ENCODE measurements at regions of chr10 and their contacts with region 1.

Region 1: DNA sequence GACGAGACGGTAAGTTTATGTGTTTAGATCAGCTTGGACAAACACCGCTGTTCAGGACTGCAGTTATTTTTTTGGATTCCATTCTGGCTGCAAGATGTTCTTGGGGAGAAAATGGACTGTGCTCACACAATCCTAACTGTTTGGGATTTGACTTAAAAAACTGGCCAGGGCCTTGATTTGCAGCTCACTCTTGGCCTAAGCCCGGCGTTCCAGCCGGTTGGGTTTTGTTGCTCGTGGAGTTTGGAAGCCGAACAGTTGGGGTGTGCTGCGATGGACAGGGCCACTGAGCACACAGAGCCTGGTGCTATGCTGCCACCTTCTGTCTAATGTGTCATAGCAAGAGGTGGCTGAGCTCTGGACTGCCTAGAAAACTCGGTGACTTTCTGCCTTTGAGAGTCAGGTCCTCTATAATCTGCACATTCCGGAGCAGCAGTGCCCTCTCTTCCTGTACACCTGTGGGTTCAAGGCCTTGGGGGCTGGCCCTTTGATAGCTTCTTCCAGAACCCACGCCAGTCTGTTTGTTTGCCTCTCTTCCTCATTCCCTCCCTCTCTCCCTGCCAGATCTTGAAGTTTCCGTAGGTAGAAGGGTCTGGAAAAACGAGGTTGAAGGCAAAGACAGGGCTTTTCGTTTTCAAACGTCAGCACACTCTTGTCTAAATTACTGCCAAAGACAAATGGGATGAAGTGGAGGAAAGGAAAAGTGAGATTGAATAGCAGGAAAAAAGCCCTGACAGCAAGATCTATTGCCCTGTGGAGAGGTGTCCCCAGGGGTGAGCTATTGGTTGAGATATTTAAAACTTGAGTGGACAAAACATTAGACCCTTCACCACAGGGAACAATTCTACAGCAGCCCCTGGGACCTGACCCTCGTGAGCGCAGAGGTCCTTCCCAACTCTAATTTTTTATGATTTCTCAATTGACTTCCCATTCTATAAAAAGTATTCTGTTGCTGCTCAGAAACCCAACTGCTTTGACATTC is 167.5 kb upstream of the HABP2 start:
- DNase-seq: peak; percentile 86
- H3K4me3 ChIP-seq: no peak overlapping the region
- H3K27ac ChIP-seq: peak overlapping the region in 1 of 2 donors; percentile 2
- H3K4me1 ChIP-seq: no peaks in the 10 kb centered on the region
- H3K27me3 ChIP-seq: no peaks in the 10 kb centered on the region
- CTCF ChIP-seq: peak; percentile 45 to 83 (median 76)
- POLR2A ChIP-seq: no peak

Region 2: DNA sequence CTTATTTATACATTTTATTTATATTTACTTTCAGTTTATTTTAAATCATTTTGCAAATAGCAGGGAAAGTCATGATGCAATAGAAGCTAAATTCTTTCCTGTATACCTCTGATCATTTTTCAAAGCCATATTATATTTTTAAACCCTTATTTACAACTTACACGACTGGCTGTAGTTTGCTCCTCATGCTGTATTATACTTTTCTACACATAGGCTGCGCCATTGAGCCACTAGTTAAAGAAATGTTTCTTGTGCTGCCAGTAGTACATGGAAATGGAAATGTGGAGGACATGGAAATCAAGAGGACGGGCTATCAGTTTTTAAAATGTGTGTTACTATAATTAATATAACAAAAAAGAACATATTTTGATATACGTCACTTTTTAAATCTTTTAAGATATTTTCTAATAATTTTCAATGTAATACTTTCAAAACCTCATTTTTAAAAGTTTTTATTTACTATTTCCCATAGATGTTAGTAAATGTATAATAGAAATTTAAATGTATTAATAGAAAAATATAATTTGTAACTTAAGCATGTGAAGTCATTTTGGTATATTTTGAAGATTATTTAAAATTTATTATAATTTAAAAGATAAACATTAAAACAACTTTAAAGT is 819.8 kb before region 1 on chr10:
- intact Hi-C with region 1: loop called (anchors 10 kb)
- DNase-seq: peak; percentile 13
- H3K4me3 ChIP-seq: no peak overlapping the region
- H3K27ac ChIP-seq: no peak overlapping the region
- H3K4me1 ChIP-seq: no peaks in the 10 kb centered on the region
- H3K27me3 ChIP-seq: no peaks in the 10 kb centered on the region
- CTCF ChIP-seq: peak in 2 of 4 experiments; percentile 62 to 65
- POLR2A ChIP-seq: no peak

Region 3: GRCh38 chr10:112815269-112816032 is 569.9 kb before region 1 on chr10:
- intact Hi-C with region 1: no loop called
- DNase-seq: no peak
- H3K4me3 ChIP-seq: no peak overlapping the region
- H3K27ac ChIP-seq: no peak overlapping the region
- H3K4me1 ChIP-seq: peaks cover 4% of the 10 kb centered on the region
- H3K27me3 ChIP-seq: no peaks in the 10 kb centered on the region
- CTCF ChIP-seq: no peak
- POLR2A ChIP-seq: no peak

Region 4: GRCh38 chr10:112949875-112950507 is 435.3 kb before region 1 on chr10 and contains the start of gene TCF7L2:
- intact Hi-C with region 1: loop called (anchors 5 kb)
- DNase-seq: peak; percentile 97
- H3K4me3 ChIP-seq: peak within 1 kb of the TSS; percentile 68 to 78
- H3K27ac ChIP-seq: peak within 1 kb of the TSS; percentile 91 to 98
- H3K4me1 ChIP-seq: peaks cover 17% of the 10 kb centered on the region
- H3K27me3 ChIP-seq: no peaks in the 10 kb centered on the region
- CTCF ChIP-seq: no peak
- POLR2A ChIP-seq: peak; percentile 77
- total RNA-seq, gene TCF7L2: 9.8 to 29.8 TPM

Region 5: DNA sequence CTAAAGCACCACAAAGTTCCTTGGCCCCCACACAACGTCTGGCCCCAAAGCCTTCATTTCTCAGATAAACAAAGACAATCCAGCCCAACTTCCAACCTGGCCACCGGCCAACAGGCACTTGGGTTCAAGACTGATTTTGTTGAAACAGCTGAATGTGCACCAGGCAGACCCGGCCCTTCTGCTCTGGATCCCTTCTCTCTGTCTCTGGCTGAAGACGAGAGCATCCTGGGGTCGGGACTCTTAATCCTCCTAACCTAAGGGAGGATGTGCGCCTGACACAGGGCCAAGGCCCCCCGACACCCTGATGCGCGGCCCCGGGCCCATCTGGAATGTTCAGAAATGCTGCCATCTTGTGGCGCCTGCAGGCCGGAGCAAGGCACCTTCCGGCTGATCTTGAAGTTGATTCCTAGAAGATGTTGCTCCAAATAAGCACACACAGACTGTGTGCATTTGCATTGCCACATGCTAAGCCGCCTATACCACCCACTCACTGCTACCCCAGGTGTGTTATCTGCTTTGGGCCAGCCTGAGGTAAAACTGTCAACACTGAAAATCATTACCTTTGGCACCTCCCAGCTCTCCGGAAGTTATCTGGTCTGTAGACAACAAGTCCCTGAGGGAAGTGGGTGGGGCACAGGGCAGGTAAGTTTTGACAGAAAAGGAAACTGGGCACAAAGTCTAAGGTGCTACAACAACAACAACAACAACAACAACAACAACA is 69.2 kb after region 1 on chr10:
- intact Hi-C with region 1: loop called (anchors 5 kb)
- DNase-seq: peak; percentile 31
- H3K4me3 ChIP-seq: no peak overlapping the region
- H3K27ac ChIP-seq: no peak overlapping the region
- H3K4me1 ChIP-seq: no peaks in the 10 kb centered on the region
- H3K27me3 ChIP-seq: no peaks in the 10 kb centered on the region
- CTCF ChIP-seq: peak; percentile 40 to 70 (median 50)
- POLR2A ChIP-seq: no peak

Measured in prostate gland (tissue), 2 donors.